H1 (cell line): ENCODE measurements at regions of chr7 and their contacts with region 1.

Region 1: DNA sequence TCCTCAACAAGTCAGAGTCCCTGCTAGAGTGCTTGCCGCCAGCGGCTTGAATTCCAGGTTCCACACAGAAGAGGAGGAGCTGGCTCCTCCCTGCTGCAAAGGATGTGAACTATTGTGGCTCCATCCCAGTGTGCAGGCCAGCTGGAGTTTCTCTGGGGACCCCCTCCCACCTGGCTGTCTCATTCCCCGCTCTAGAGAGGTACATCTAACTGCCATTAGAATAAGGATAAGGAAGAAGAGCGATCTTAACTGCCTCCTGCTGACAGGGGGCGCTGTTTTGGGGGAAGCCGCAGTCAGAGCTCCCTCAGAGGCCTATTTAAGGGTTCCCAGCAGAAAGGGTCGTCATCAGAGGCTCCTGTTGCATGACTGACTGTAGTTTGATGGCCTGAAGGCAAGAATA is 40.8 kb upstream of the HECW1 start:
- DNase-seq: peak; percentile 69 to 90
- H3K4me3 ChIP-seq: no peak overlapping the region
- H3K27ac ChIP-seq: no peak overlapping the region
- H3K4me1 ChIP-seq: peaks cover 0 to 3% (median 1%) of the 10 kb centered on the region in 4 experiments; a peak in 3 of 7 replicates
- H3K27me3 ChIP-seq: no peaks in the 10 kb centered on the region
- CTCF ChIP-seq: peak; percentile 66 to 89 (median 77)
- EP300 ChIP-seq: no peak
- POLR2A ChIP-seq: no peak
- RAD21 ChIP-seq: peak; percentile 56 to 75

Region 2: GRCh38 chr7:42886129-42886528 is 185.5 kb before region 1 on chr7:
- CTCF ChIA-PET with region 1: no interaction called
- POLR2A ChIA-PET with region 1: no interaction called
- DNase-seq: no peak
- H3K4me3 ChIP-seq: no peak overlapping the region
- H3K27ac ChIP-seq: no peak overlapping the region
- H3K4me1 ChIP-seq: peaks cover 2 to 6% (median 4%) of the 10 kb centered on the region in 4 experiments; a peak in 6 of 7 replicates
- H3K27me3 ChIP-seq: no peaks in the 10 kb centered on the region
- CTCF ChIP-seq: peak in 1 of 3 experiments; percentile 46; a peak in 2 of 4 replicates
- EP300 ChIP-seq: no peak
- POLR2A ChIP-seq: no peak
- RAD21 ChIP-seq: peak; percentile 47 to 51

Region 3: GRCh38 chr7:43004082-43004481 is 67.5 kb before region 1 on chr7:
- CTCF ChIA-PET with region 1: interaction called, 10 read pairs
- POLR2A ChIA-PET with region 1: no interaction called
- DNase-seq: no peak
- H3K4me3 ChIP-seq: no peak overlapping the region
- H3K27ac ChIP-seq: no peak overlapping the region
- H3K4me1 ChIP-seq: peaks cover 2 to 5% (median 2%) of the 10 kb centered on the region in 4 experiments; a peak in 4 of 7 replicates
- H3K27me3 ChIP-seq: no peaks in the 10 kb centered on the region
- CTCF ChIP-seq: no peak
- EP300 ChIP-seq: no peak
- POLR2A ChIP-seq: no peak
- RAD21 ChIP-seq: no peak

Region 4: DNA sequence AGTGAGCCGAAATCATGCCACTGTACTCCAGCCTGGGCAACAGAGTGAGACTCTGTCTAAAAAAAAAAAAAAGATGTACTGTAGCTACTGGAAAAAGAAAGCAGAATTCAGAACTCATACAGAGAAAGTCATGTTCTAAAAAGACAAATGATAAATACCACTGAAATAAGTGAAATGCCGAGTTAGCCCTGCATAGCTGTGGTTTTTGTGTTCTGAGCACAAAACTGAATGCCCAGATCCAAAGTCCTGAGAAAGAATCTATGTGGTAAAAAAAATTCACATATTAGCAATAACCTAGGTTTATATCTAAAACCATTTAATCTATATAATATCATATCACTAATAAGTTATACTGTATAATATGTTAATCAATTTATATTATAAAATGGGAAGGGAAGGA is 11.5 kb after region 1 on chr7:
- CTCF ChIA-PET with region 1: interaction called, 10 read pairs
- POLR2A ChIA-PET with region 1: no interaction called
- DNase-seq: no peak
- H3K4me3 ChIP-seq: no peak overlapping the region
- H3K27ac ChIP-seq: no peak overlapping the region
- H3K4me1 ChIP-seq: peaks cover 0 to 3% (median under 1%) of the 10 kb centered on the region in 4 experiments; a peak in 2 of 7 replicates
- H3K27me3 ChIP-seq: no peaks in the 10 kb centered on the region
- CTCF ChIP-seq: no peak
- EP300 ChIP-seq: no peak
- POLR2A ChIP-seq: no peak
- RAD21 ChIP-seq: no peak

Region 5: GRCh38 chr7:43408981-43409380 is 337.4 kb after region 1 on chr7:
- CTCF ChIA-PET with region 1: no interaction called
- POLR2A ChIA-PET with region 1: no interaction called
- DNase-seq: no peak
- H3K4me3 ChIP-seq: no peak overlapping the region
- H3K27ac ChIP-seq: no peak overlapping the region
- H3K4me1 ChIP-seq: peaks cover 0 to 7% (median 0%) of the 10 kb centered on the region in 4 experiments; a peak in 2 of 7 replicates
- H3K27me3 ChIP-seq: no peaks in the 10 kb centered on the region
- CTCF ChIP-seq: no peak
- EP300 ChIP-seq: no peak
- POLR2A ChIP-seq: no peak
- RAD21 ChIP-seq: no peak